H1 (cell line): ENCODE measurements at regions of chr11 and their contacts with region 1.

Region 1: DNA sequence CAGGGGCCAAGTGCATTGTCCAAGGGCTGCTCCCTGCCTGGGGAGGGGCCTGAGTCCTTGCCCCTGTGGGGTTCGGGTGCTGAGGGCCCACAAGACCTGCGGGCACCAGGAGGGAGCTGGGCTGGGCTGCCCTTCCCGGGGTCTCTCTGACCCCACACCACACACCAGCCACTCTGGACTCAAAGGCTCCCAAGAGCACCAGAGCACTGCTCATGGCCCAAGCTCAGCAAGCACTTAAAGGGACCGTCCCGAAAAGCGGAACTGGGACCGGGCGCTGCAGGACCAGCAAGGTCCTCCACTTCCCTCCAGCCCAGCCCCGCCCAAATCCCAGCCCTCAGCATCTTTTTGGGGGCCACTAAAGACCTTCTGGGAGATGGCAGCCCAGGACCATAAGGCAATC is 5.3 kb downstream of the LSP1 start:
- DNase-seq: no peak
- H3K4me3 ChIP-seq: no peak overlapping the region
- H3K27ac ChIP-seq: no peak overlapping the region
- H3K4me1 ChIP-seq: peaks cover 0 to 6% (median 0%) of the 10 kb centered on the region in 4 experiments; a peak in 3 of 7 replicates
- H3K27me3 ChIP-seq: no peaks in the 10 kb centered on the region; a peak in 1 of 7 replicates
- CTCF ChIP-seq: no peak
- EP300 ChIP-seq: no peak
- POLR2A ChIP-seq: no peak
- RAD21 ChIP-seq: no peak

Region 2: DNA sequence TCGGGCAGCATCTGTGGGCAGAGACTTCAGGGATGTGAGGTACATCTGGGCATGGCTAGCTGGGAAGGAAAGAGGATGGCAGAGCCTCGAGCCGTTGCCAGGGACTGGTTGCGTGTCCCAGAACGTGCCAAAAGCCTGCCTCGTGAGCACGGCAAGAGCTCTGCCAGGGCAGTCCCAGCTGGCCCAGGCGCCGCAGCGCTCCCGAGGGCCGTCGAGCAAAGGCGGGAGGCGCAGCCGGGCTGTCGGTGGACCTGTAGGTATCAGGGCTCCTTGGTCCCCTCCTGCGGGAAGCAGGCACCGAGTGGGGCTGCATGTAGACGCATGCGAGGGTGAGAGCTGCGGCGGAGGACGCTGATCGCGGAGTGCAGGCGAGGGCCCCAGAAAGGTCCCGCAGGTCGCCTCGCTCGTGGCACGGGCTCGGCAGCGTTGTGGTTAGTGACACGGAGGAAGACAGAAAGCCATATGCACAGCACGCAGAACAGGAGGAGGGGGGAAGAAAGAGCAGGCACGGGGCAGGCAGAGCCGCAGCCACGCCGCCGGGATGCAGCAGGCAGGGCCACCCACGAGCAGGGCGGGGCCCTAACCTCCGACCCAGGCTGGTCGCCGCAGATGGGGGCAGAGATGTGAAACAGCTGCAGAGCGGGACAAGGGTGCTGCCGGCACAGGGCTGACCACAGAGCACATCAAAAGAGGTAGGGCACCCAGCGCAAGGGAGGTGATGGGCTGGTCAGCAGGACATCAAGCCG is 12.7 kb after region 1 on chr11:
- CTCF ChIA-PET with region 1: interaction called, 21 read pairs
- POLR2A ChIA-PET with region 1: no interaction called
- DNase-seq: no peak
- H3K4me3 ChIP-seq: no peak overlapping the region
- H3K27ac ChIP-seq: no peak overlapping the region
- H3K4me1 ChIP-seq: no peaks in the 10 kb centered on the region
- H3K27me3 ChIP-seq: peaks cover 0 to 3% (median 0%) of the 10 kb centered on the region in 4 experiments; a peak in 1 of 7 replicates
- CTCF ChIP-seq: no peak
- EP300 ChIP-seq: no peak
- POLR2A ChIP-seq: no peak
- RAD21 ChIP-seq: no peak